ENCODE measurements at regions of chr1 and their contacts with region 1.

Region 1: GRCh38 chr1:224922404-224923164 is 6.9 kb upstream of the DNAH14 start:
- DNase-seq: no peak
- ATAC-seq: peak; percentile 92
- H3K4me3 ChIP-seq: no peak overlapping the region
- H3K27ac ChIP-seq: no peak overlapping the region
- H3K4me1 ChIP-seq: no peaks in the 10 kb centered on the region
- H3K27me3 ChIP-seq: no peaks in the 10 kb centered on the region
- CTCF ChIP-seq: peak; percentile 86

Region 2: GRCh38 chr1:224454397-224455066 is 468.1 kb before region 1 on chr1:
- CTCF ChIA-PET with region 1: interaction called, 12 read pairs
- POLR2A ChIA-PET with region 1: no interaction called
- in situ Hi-C with region 1: no loop called
- intact Hi-C with region 1: no loop called
- DNase-seq: no peak
- ATAC-seq: no peak
- H3K4me3 ChIP-seq: no peak overlapping the region
- H3K27ac ChIP-seq: no peak overlapping the region
- H3K4me1 ChIP-seq: peaks cover 13% of the 10 kb centered on the region
- H3K27me3 ChIP-seq: no peaks in the 10 kb centered on the region
- CTCF ChIP-seq: no peak

Region 3: GRCh38 chr1:224513787-224514209 is 408.8 kb before region 1 on chr1:
- CTCF ChIA-PET with region 1: interaction called, 23 read pairs
- POLR2A ChIA-PET with region 1: no interaction called
- in situ Hi-C with region 1: no loop called
- intact Hi-C with region 1: loop called (anchors 1 kb)
- DNase-seq: no peak
- ATAC-seq: peak; percentile 97
- H3K4me3 ChIP-seq: no peak overlapping the region
- H3K27ac ChIP-seq: no peak overlapping the region
- H3K4me1 ChIP-seq: peaks cover 8% of the 10 kb centered on the region
- H3K27me3 ChIP-seq: no peaks in the 10 kb centered on the region
- CTCF ChIP-seq: peak; percentile 93

Region 4: GRCh38 chr1:224644553-224645154 is 277.9 kb before region 1 on chr1:
- CTCF ChIA-PET with region 1: interaction called, 12 read pairs
- POLR2A ChIA-PET with region 1: no interaction called
- in situ Hi-C with region 1: no loop called
- intact Hi-C with region 1: loop called (anchors 5 kb)
- DNase-seq: peak; percentile 54
- ATAC-seq: peak; percentile 78
- H3K4me3 ChIP-seq: no peak overlapping the region
- H3K27ac ChIP-seq: no peak overlapping the region
- H3K4me1 ChIP-seq: no peaks in the 10 kb centered on the region
- H3K27me3 ChIP-seq: no peaks in the 10 kb centered on the region
- CTCF ChIP-seq: peak; percentile 95

Region 5: DNA sequence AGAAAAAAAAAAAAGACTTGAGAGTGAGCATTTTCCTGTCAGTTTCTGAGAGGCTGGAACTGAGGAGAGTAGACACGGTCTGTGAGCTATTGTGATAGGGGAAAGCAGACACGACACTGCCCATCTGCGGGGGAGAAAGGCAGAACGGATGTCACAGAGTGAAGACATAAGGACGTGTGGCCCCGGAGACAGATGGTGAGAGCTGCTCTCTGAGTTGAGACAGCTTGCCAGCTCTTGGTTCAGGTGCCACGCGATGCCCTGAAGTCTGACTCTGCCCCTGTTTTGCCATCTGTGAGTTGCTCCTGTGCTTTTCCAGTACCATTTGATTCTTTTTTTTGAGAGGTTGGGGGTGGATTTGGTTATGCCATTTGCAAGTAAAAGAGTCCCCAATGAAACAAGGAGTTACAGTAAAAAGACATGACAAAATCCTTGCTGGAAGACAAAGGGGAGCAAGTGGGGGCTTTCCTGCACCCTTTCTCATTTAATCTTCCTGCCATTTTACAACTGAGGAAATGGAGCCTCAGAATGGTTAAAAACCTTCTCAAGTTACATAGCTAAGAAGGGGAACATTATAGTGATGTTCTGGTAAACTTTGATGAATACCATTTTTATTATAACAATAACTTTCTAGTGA is 122.0 kb before region 1 on chr1:
- CTCF ChIA-PET with region 1: no interaction called
- POLR2A ChIA-PET with region 1: no interaction called
- in situ Hi-C with region 1: no loop called
- intact Hi-C with region 1: no loop called
- DNase-seq: no peak
- ATAC-seq: no peak
- H3K4me3 ChIP-seq: no peak overlapping the region
- H3K27ac ChIP-seq: no peak overlapping the region
- H3K4me1 ChIP-seq: no peaks in the 10 kb centered on the region
- H3K27me3 ChIP-seq: no peaks in the 10 kb centered on the region; the same call in none of the 2 replicates
- CTCF ChIP-seq: no peak

Region 6: DNA sequence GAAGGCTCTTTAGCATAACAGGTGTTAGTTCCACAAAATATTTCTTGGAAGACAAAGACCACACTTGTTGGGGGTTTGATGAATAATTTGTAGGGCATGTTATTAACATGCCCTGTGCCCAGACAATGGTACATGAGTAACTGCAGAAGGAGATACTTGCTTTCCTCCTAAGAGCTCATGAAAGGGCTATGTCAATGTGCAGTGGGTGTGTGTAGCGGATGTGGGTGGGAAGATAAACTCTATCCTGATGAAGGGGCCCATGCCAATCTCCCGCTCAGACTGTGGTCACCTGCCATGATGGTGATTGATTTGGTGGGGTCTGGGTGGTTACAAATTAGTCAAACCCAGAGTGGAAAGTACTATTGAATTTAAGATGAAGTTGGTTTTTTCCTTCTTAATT is 62.9 kb before region 1 on chr1:
- CTCF ChIA-PET with region 1: no interaction called
- POLR2A ChIA-PET with region 1: no interaction called
- in situ Hi-C with region 1: no loop called
- intact Hi-C with region 1: loop called (anchors 5 kb)
- DNase-seq: no peak
- ATAC-seq: no peak
- H3K4me3 ChIP-seq: no peak overlapping the region
- H3K27ac ChIP-seq: no peak overlapping the region
- H3K4me1 ChIP-seq: no peaks in the 10 kb centered on the region
- H3K27me3 ChIP-seq: 0 out of 2 replicates have a peak, but pooled peaks cover 2% of the 10 kb centered on the region
- CTCF ChIP-seq: no peak

Region 7: GRCh38 chr1:224996266-224996665 is 73.7 kb after region 1 on chr1:
- CTCF ChIA-PET with region 1: no interaction called
- POLR2A ChIA-PET with region 1: no interaction called
- in situ Hi-C with region 1: no loop called
- intact Hi-C with region 1: no loop called
- DNase-seq: no peak
- ATAC-seq: no peak
- H3K4me3 ChIP-seq: no peak overlapping the region
- H3K27ac ChIP-seq: no peak overlapping the region
- H3K4me1 ChIP-seq: no peaks in the 10 kb centered on the region
- H3K27me3 ChIP-seq: no peaks in the 10 kb centered on the region
- CTCF ChIP-seq: no peak

Measured in Panc1 (cell line).